ENCODE measurements at regions of chr17 and their contacts with region 1.

Region 1: DNA sequence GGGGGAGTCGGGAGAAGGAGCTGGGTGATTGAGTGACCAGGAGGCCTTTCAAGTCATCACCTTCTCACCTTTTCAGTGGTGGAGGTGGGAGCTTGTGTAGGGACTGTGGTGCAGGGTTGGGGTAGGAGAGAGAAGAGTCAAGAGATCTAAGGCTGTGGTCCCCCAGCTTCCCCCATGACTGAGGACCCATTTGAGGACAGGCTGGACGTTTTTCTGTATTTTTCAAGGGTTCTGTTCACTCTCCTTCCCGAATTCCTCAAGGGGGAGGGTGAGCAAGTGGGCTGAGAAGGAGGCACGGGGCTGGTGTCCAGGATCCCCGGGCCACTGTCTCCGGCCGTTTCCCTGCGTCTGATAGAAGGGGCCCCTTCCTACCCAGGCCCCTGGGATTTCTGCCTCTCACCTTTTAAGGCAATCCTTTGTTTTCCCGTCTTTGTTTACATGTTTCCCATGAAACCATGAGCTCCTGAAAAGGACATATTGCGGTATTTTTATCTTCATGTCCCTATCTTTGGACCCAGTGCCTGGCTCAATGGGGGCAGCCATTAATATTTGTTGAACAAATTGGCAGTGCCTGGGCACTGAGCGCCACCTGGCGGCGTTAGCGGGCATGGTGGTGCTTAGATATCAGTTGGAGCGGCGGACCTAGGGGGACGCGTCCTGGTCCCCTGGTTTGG is 9.2 kb upstream of the CD300A start:
- DNase-seq: peak; percentile 58 to 70 (median 64)
- H3K4me3 ChIP-seq: no peak overlapping the region
- H3K4me3 Mint-ChIP-seq: peak overlapping the region in 5 of 8 donors; percentile 26 to 71 (median 36)
- H3K27ac ChIP-seq: no peak overlapping the region
- H3K27ac Mint-ChIP-seq: peak overlapping the region in 5 of 7 donors; percentile 43 to 77 (median 61)
- H3K4me1 ChIP-seq: peaks cover 56% of the 10 kb centered on the region
- H3K4me1 Mint-ChIP-seq: peaks cover 18 to 57% (median 37%) of the 10 kb centered on the region in 4 donors
- H3K27me3 ChIP-seq: no peaks in the 10 kb centered on the region
- H3K27me3 Mint-ChIP-seq: no peaks in the 10 kb centered on the region

Region 2: GRCh38 chr17:74203439-74204240 is 253.6 kb before region 1 on chr17 and contains the start of gene RPL38:
- CTCF ChIA-PET with region 1: interaction called, 5 read pairs
- POLR2A ChIA-PET with region 1: interaction called, 5 read pairs
- intact Hi-C with region 1: loop called (anchors 1 kb)
- DNase-seq: peak; percentile 92 to 96 (median 94)
- H3K4me3 ChIP-seq: peak within 1 kb of the TSS; percentile 79 to 86
- H3K4me3 Mint-ChIP-seq: peak within 1 kb of the TSS; percentile 97 to 100 (median 98)
- H3K27ac ChIP-seq: peak within 1 kb of the TSS; percentile 87
- H3K27ac Mint-ChIP-seq: peak within 1 kb of the TSS; percentile 94 to 98 (median 97)
- H3K4me1 ChIP-seq: peaks cover 55% of the 10 kb centered on the region
- H3K4me1 Mint-ChIP-seq: peaks cover 25 to 48% (median 36%) of the 10 kb centered on the region in 4 donors
- H3K27me3 ChIP-seq: peaks cover 7% of the 10 kb centered on the region
- H3K27me3 Mint-ChIP-seq: peaks cover 11 to 19% of the 10 kb centered on the region in 2 donors
- total RNA-seq, gene RPL38: 2,053 to 2,073 TPM

Region 3: GRCh38 chr17:74296548-74296936 is 160.7 kb before region 1 on chr17:
- CTCF ChIA-PET with region 1: interaction called, 4 read pairs
- POLR2A ChIA-PET with region 1: no interaction called
- intact Hi-C with region 1: loop called (anchors 1 kb)
- DNase-seq: peak in 4 of 5 donors; percentile 43 to 46 (median 44)
- H3K4me3 ChIP-seq: no peak overlapping the region
- H3K4me3 Mint-ChIP-seq: peak overlapping the region in 2 of 8 donors; percentile 27 to 35
- H3K27ac ChIP-seq: no peak overlapping the region
- H3K27ac Mint-ChIP-seq: peak overlapping the region in 6 of 7 donors; percentile 21 to 84 (median 62)
- H3K4me1 ChIP-seq: peaks cover 15% of the 10 kb centered on the region
- H3K4me1 Mint-ChIP-seq: peaks cover 17 to 30% (median 25%) of the 10 kb centered on the region in 4 donors
- H3K27me3 ChIP-seq: no peaks in the 10 kb centered on the region
- H3K27me3 Mint-ChIP-seq: no peaks in the 10 kb centered on the region

Region 4: GRCh38 chr17:74379495-74380085 is 77.7 kb before region 1 on chr17:
- CTCF ChIA-PET with region 1: interaction called, 5 read pairs
- POLR2A ChIA-PET with region 1: no interaction called
- intact Hi-C with region 1: loop called (anchors 1 kb)
- DNase-seq: peak; percentile 84 to 88 (median 87)
- H3K4me3 ChIP-seq: no peak overlapping the region
- H3K4me3 Mint-ChIP-seq: peak overlapping the region in 1 of 8 donors; percentile 13
- H3K27ac ChIP-seq: no peak overlapping the region
- H3K27ac Mint-ChIP-seq: no peak overlapping the region
- H3K4me1 ChIP-seq: peaks cover 9% of the 10 kb centered on the region
- H3K4me1 Mint-ChIP-seq: peaks cover 0 to 8% (median under 1%) of the 10 kb centered on the region in 4 donors
- H3K27me3 ChIP-seq: no peaks in the 10 kb centered on the region
- H3K27me3 Mint-ChIP-seq: peaks cover 2 to 4% of the 10 kb centered on the region in 2 donors

Region 5: DNA sequence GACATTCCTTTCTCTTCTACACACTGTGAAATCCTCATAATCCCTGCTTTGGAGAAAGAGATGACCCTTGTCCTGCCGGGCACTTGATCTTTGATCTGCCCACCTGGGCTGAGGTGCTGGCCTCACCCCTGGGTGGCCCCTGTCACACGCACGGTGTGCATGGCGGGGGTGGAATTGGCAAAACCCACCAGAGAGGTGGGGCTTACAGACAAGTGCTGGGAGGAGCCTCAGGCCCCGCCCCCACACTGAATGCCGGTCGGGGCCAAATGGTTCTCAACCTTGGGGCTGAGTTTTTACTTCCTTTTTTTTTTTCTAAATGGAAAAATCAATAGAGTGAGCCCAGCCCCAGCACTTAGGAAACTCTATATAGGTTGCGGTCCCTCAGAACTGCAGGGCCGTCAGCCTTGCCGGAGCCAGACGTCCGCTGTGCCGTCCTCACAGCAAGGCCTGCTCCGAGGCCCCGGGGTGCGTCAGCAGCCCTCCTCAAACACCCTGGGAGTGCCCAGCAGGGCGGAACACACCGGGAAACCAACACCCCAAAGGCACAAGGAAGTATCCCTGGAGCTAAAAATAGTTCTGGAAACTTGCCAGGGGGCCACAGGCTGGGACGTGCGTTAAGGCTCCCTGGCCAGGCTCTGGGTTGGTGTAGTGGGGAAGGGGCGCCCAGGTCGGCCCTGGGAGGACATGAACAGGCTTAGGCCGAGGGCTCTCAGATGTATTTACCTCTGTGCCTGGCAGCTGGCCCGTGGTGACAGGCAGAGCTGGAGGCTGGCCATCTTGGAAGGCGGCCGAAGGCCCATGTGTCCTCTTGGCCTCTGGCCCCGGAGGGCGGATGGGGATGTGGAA is 14.4 kb before region 1 on chr17:
- CTCF ChIA-PET with region 1: interaction called, 34 read pairs
- POLR2A ChIA-PET with region 1: interaction called, 4 read pairs
- intact Hi-C with region 1: no loop called
- DNase-seq: no peak
- H3K4me3 ChIP-seq: no peak overlapping the region
- H3K4me3 Mint-ChIP-seq: no peak overlapping the region
- H3K27ac ChIP-seq: no peak overlapping the region
- H3K27ac Mint-ChIP-seq: no peak overlapping the region
- H3K4me1 ChIP-seq: no peaks in the 10 kb centered on the region
- H3K4me1 Mint-ChIP-seq: peaks cover 0 to 1% (median 0%) of the 10 kb centered on the region in 4 donors
- H3K27me3 ChIP-seq: no peaks in the 10 kb centered on the region
- H3K27me3 Mint-ChIP-seq: peaks cover 0 to 2% of the 10 kb centered on the region in 2 donors

Region 6: DNA sequence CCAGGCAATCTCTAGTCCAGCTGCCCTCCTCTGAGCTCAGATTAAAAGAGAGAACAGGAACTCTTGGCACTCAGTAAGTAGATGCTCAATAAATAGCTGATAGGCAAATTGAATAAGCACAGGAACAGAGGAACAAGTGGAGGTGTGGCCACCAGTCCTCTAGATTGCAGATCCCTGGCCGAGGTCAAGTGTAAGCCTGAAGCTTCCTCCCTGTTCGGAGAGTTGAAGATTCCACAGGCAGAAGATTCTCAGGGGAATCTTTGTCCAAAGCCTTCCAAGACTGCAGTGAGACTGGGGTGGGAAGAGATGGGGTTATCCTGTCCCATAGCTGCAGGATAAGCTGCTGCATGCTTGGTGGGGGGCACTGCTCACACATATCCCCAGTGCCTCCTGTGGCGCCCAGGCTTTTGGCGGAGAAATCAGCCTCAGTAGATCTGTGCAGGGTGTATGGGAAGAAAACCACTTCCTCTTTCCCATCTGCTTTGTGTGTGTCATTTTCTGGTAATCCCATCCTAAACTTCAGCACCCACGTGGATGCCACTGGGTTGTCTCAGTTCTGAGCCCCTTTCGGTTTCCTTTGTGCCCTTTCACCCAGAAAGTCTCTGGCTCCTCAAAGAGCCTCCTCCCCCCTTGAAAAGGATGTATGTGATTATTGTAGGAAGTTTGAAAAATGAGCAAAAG is 21.3 kb after region 1 on chr17:
- CTCF ChIA-PET with region 1: interaction called, 42 read pairs
- POLR2A ChIA-PET with region 1: interaction called, 6 read pairs
- intact Hi-C with region 1: no loop called
- DNase-seq: peak in 2 of 5 donors; percentile 24 to 50
- H3K4me3 ChIP-seq: peak overlapping the region; percentile 9 to 30
- H3K4me3 Mint-ChIP-seq: peak overlapping the region; percentile 8 to 83 (median 77)
- H3K27ac ChIP-seq: no peak overlapping the region
- H3K27ac Mint-ChIP-seq: peak overlapping the region; percentile 56 to 93 (median 86)
- H3K4me1 ChIP-seq: peaks cover 58% of the 10 kb centered on the region
- H3K4me1 Mint-ChIP-seq: peaks cover 43 to 71% (median 57%) of the 10 kb centered on the region in 4 donors
- H3K27me3 ChIP-seq: no peaks in the 10 kb centered on the region
- H3K27me3 Mint-ChIP-seq: no peaks in the 10 kb centered on the region

Region 7: GRCh38 chr17:74493381-74493833 is 36.1 kb after region 1 on chr17:
- CTCF ChIA-PET with region 1: interaction called, 105 read pairs
- POLR2A ChIA-PET with region 1: interaction called, 5 read pairs
- intact Hi-C with region 1: loop called (anchors 1 kb)
- DNase-seq: peak; percentile 58 to 71 (median 65)
- H3K4me3 ChIP-seq: no peak overlapping the region
- H3K4me3 Mint-ChIP-seq: no peak overlapping the region
- H3K27ac ChIP-seq: no peak overlapping the region
- H3K27ac Mint-ChIP-seq: peak overlapping the region in 3 of 7 donors; percentile 12 to 70 (median 43)
- H3K4me1 ChIP-seq: peaks cover 5% of the 10 kb centered on the region
- H3K4me1 Mint-ChIP-seq: peaks cover 9 to 18% (median 12%) of the 10 kb centered on the region in 4 donors
- H3K27me3 ChIP-seq: no peaks in the 10 kb centered on the region
- H3K27me3 Mint-ChIP-seq: peaks cover 0 to 2% of the 10 kb centered on the region in 2 donors